Activated naive CD4-positive, alpha-beta T cell treated with anti-CD3 and anti-CD28 coated beads for 36 hours (primary cell): ENCODE measurements at regions of chr1 and their contacts with region 1.

Region 1: DNA sequence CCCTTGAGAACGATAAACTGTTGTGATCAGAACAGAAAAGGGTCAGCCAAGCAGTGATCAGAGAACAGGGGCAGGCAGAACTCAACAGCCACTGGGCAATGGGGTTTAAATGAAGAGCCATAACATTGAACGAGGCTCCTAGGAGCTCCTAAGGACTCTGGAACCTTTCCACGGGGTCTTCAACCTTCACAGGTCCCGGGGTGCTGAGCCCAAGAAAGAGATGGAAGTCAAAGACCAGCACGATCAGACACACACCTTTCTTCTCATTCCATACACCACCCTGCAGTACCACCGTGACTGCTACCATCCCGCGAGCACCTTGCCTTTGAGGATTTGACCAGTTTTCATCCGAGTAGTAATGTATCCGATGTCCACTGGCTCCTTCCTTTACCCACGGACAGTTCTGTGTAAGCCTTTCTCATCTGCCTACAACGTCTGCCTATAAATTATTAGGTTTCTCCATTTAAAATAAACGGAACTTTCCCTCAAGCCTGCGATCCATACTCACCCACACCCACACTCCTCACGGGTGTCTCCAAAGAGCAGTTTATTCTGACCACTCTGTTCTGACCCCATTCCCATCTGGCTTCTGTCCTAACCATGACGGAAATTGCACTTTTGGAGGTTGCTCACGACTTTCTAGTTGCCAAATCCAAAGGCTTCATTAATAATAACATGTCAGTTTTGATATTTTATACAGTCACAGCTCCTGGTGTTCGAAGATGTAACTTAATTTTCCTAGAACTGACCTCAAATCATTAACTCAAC is 16.8 kb upstream of the HHAT start:
- DNase-seq: no peak
- H3K4me3 Mint-ChIP-seq: peak overlapping the region; percentile 79
- H3K27ac Mint-ChIP-seq: no peak overlapping the region
- H3K4me1 Mint-ChIP-seq: peaks cover 4% of the 10 kb centered on the region
- H3K27me3 Mint-ChIP-seq: peaks cover 20% of the 10 kb centered on the region

Region 2: GRCh38 chr1:209860293-209860881 is 451.5 kb before region 1 on chr1:
- CTCF ChIA-PET with region 1: interaction called, 4 read pairs
- intact Hi-C with region 1: loop called (anchors 1 kb)
- DNase-seq: peak; percentile 83
- H3K4me3 Mint-ChIP-seq: no peak overlapping the region
- H3K27ac Mint-ChIP-seq: no peak overlapping the region
- H3K4me1 Mint-ChIP-seq: no peaks in the 10 kb centered on the region
- H3K27me3 Mint-ChIP-seq: peaks cover 4% of the 10 kb centered on the region

Region 3: GRCh38 chr1:209989525-209989924 is 322.4 kb before region 1 on chr1:
- CTCF ChIA-PET with region 1: no interaction called
- intact Hi-C with region 1: loop called (anchors 5 kb)
- DNase-seq: no peak
- H3K4me3 Mint-ChIP-seq: no peak overlapping the region
- H3K27ac Mint-ChIP-seq: no peak overlapping the region
- H3K4me1 Mint-ChIP-seq: no peaks in the 10 kb centered on the region
- H3K27me3 Mint-ChIP-seq: peaks cover 15% of the 10 kb centered on the region

Region 4: DNA sequence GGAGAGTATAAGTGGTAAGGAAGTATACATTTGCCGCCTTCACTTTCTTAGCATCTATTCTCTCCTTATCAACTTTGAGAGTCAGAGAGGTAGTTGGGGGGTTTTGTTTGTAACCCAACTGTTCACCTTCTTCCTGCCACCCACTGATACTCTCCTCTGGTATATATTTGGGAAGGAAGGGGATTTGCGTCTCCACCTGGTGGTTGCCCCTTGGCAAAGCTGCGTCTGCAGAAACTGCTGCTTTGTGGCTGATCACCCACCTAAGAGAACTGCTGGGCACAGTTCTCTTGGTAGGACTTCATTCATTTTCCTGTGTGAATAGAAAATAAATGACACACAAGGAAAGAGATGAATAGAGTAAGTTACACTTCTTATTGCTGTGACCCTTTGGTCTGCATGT is 286.9 kb before region 1 on chr1:
- CTCF ChIA-PET with region 1: no interaction called
- intact Hi-C with region 1: loop called (anchors 10 kb)
- DNase-seq: no peak
- H3K4me3 Mint-ChIP-seq: no peak overlapping the region
- H3K27ac Mint-ChIP-seq: no peak overlapping the region
- H3K4me1 Mint-ChIP-seq: no peaks in the 10 kb centered on the region
- H3K27me3 Mint-ChIP-seq: no peaks in the 10 kb centered on the region

Region 5: DNA sequence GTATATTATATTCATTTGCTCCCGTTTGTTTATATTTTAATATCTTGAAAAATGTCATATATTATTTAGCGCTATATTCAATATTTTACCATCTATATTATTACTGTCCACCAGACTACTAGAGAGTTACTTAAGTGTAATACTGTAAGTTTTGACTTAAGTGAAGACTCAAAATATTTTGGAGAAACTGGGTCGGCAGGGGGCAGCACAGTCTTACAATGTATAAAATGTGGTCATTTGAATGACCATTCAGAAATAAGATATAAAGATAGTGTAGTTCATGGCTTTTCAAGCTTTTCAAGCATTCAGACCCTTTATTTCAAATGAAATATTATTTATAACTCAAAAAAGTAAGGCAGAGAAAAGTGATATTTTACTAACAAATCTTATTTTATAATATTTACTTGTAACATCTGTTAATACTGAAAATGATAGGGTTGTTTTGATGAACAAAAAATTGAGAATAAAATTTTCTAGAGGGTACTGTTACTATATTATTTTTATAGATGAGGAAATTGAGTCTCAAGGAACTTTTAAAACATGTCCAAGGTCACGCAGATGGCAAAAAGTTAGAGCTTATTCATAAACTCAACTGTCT is 168.3 kb before region 1 on chr1:
- CTCF ChIA-PET with region 1: interaction called, 21 read pairs
- intact Hi-C with region 1: loop called (anchors 1 kb)
- DNase-seq: peak; percentile 77
- H3K4me3 Mint-ChIP-seq: no peak overlapping the region
- H3K27ac Mint-ChIP-seq: no peak overlapping the region
- H3K4me1 Mint-ChIP-seq: no peaks in the 10 kb centered on the region
- H3K27me3 Mint-ChIP-seq: peaks cover 13% of the 10 kb centered on the region

Region 6: DNA sequence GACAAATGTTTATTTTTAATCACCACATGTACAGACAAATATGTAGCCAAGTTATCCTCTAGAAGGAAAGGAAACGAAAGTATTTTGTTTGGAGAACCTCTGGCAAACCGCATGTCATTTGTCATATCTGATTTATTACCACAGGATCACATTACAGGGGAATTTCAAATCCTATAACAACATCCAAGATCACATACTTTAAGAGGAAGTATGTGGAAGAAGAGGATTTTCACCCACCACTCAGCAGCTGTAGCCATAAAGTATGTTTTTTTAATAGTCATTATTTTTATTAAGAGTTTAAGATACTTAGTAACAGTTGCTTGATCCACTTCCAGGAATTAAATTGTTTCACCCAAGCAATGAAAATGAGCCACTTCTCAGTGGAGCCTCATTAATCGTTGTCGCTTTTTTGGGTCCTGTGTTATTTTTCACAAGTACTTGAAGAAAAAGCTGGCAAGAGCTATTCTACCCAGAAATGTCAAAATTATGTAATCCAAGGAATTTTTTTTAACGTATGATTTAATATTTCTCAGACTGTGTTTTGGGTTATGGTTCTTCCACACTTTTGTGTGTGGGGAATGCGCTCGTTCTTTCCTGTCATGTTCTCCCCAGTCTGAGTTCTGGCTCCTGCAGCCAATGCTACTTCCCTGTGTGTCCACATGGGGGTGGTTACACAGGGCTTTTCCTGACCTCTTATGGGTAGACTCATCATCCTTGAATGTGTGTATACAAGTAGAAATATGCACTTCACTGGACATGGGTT is 72.4 kb before region 1 on chr1:
- CTCF ChIA-PET with region 1: no interaction called
- intact Hi-C with region 1: no loop called
- DNase-seq: no peak
- H3K4me3 Mint-ChIP-seq: no peak overlapping the region
- H3K27ac Mint-ChIP-seq: no peak overlapping the region
- H3K4me1 Mint-ChIP-seq: no peaks in the 10 kb centered on the region
- H3K27me3 Mint-ChIP-seq: peaks cover 61% of the 10 kb centered on the region

Region 7: DNA sequence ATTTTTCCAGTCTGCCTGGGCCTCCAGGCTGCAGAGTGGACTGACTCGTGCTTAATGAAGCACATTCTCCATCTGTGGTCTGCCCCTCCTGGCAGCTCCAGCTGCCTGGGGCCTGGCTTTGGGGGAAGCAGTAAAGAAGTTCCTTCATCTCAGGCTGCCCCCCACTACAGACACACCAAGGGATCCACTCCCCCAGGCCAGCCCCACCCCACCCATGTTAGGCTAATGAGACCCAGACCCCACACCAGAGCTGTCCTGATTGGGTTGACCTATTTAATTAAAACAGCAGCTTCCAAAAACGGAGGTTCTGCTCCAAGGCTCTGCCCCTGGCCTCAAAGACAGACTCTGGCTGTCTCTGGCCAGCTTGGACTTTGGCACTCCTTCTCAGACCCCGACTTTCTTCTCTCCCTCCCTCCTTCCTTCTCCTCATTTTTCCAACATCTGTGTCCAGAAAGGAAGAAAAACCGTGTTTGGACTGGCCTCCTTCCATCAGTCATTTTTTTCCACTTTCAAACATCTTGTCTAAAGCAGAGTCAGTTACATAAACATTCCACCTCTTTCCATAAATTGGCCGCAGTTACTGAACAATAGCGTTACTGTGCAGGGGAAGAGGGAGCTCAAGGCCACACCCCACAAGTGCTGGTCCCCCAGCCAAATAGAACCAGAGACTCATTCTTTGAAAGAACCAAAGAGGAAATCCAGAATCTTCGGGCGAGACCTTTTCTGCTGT is 49.6 kb before region 1 on chr1:
- CTCF ChIA-PET with region 1: no interaction called
- intact Hi-C with region 1: no loop called
- DNase-seq: no peak
- H3K4me3 Mint-ChIP-seq: no peak overlapping the region
- H3K27ac Mint-ChIP-seq: no peak overlapping the region
- H3K4me1 Mint-ChIP-seq: no peaks in the 10 kb centered on the region
- H3K27me3 Mint-ChIP-seq: peaks cover 2% of the 10 kb centered on the region